Common myeloid progenitor, CD34-positive (primary cell): ENCODE measurements at regions of chr16 and their contacts with region 1.

Region 1: DNA sequence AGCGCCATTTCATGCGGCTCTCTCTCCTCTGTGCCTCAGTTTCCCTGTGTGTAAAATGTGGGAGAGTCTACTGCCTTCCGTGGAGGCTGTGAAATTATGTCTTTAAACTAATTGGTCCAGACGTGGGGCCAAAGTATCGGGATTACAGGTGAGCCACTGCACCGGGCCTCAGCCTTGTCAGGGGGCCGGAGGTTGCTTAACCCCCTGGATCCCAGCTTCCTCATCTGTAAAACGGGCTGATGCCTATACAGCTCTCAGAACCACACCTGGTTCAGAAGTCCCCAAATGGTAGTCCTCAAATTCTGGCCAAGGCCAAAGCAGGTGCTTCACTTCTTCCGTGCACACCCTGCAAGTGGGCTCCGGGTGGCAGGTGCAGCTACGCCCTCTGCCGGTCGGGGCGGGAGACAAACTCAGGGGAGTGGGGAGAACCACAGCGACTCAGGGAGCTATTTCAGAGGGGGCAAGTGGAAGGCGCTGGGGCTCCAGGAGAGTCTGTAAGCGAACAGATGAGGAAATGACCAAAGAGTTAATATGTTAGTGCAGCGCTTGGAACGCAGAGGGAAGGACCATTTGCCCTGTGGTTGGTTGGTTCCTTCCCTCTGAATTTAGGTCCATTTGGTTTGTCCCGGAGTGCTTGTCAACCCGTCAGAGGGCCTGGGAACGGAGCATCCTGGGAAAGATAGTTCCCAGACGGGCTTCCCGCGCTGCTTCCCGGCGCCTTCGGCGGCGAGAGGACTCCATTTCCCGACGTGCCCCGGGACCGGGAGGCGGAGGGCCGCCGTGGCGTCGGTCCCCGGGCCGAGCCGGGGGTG is at the start of gene MGRN1:
- DNase-seq: peak; percentile 96 to 97 (median 97)
- H3K4me3 ChIP-seq: peak within 1 kb of the TSS; percentile 78 to 94 (median 90)
- H3K27ac ChIP-seq: peak within 1 kb of the TSS; percentile 98 to 99
- H3K4me1 ChIP-seq: peaks cover 0 to 27% (median 22%) of the 10 kb centered on the region in 4 experiments
- H3K27me3 ChIP-seq: no peaks in the 10 kb centered on the region

Region 2: GRCh38 chr16:4637501-4638166 is 13.4 kb after region 1 on chr16:
- CTCF ChIA-PET with region 1: interaction called, 18 read pairs
- POLR2A ChIA-PET with region 1: no interaction called
- DNase-seq: no peak
- H3K4me3 ChIP-seq: no peak overlapping the region
- H3K27ac ChIP-seq: no peak overlapping the region
- H3K4me1 ChIP-seq: peaks cover 0 to 29% (median 21%) of the 10 kb centered on the region in 4 experiments
- H3K27me3 ChIP-seq: no peaks in the 10 kb centered on the region

Region 3: DNA sequence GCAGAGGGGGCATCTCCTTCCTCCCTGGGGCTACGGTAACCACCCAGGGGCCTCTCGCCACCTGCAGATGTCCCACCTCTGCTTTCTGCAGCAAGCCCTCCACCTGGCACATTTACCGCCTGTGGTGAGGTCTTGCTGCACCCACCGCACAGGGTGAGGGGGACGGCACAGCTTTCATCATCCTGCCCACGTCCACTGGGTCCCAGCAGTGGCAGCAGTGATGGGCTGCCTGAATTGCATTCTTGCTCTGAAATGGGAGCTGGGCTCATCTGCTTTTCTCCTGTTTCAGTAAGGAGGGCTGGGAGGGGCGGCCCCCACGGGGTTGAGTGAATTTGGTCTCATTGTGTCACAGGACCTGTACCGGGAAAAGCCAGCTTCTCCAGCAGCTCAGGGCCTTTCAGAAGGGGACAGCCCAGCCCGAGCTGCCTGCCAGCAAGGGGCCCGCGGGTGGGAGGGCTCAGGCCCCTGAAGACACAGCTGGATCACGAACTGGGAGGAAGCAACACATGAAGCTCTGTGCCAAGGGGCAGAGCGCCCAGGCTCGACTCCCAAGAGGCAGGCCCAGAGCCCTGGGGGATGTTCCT is 122.9 kb after region 1 on chr16:
- CTCF ChIA-PET with region 1: no interaction called
- POLR2A ChIA-PET with region 1: no interaction called
- DNase-seq: no peak
- H3K4me3 ChIP-seq: no peak overlapping the region
- H3K27ac ChIP-seq: no peak overlapping the region
- H3K4me1 ChIP-seq: peaks cover 0 to 15% (median 5%) of the 10 kb centered on the region in 4 experiments
- H3K27me3 ChIP-seq: peaks cover 0 to 3% (median 2%) of the 10 kb centered on the region in 5 experiments